ENCODE measurements at regions of chr21 and their contacts with region 1.

Region 1: DNA sequence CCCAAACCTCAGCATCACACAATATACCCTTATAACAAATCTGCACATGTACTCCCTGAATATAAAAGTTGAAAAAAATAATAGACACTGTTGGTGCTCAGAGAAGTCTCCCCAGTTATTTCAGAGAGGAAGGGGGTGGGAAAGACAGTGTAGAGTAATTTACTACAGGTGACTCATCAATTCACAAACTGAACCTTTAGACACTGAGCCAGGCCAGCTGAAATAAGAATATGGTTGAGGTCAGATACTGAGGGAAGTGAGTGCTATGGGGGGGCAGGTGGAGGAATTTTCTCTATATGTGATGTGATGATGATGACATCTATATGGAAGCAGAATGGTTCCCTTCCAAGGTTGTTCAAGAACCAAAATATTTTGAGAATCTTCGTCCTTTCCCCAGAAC is 50.1 kb downstream of the MRPL39 start:
- DNase-seq: no peak
- H3K4me3 ChIP-seq: no peak overlapping the region
- H3K27ac ChIP-seq: no peak overlapping the region
- H3K4me1 ChIP-seq: peaks cover 0 to 4% of the 10 kb centered on the region in 2 donors
- H3K27me3 ChIP-seq: no peaks in the 10 kb centered on the region
- CTCF ChIP-seq: no peak
- POLR2A ChIP-seq: no peak

Region 2: GRCh38 chr21:25079053-25079452 is 478.1 kb before region 1 on chr21:
- intact Hi-C with region 1: no loop called
- DNase-seq: no peak
- H3K4me3 ChIP-seq: no peak overlapping the region
- H3K27ac ChIP-seq: no peak overlapping the region
- H3K4me1 ChIP-seq: no peaks in the 10 kb centered on the region
- H3K27me3 ChIP-seq: no peaks in the 10 kb centered on the region
- CTCF ChIP-seq: no peak
- POLR2A ChIP-seq: no peak

Region 3: GRCh38 chr21:25428537-25428936 is 128.6 kb before region 1 on chr21:
- intact Hi-C with region 1: loop called (anchors 10 kb)
- DNase-seq: no peak
- H3K4me3 ChIP-seq: no peak overlapping the region
- H3K27ac ChIP-seq: no peak overlapping the region
- H3K4me1 ChIP-seq: no peaks in the 10 kb centered on the region
- H3K27me3 ChIP-seq: no peaks in the 10 kb centered on the region
- CTCF ChIP-seq: no peak
- POLR2A ChIP-seq: no peak

Region 4: GRCh38 chr21:25487046-25487594 is 70.1 kb before region 1 on chr21:
- intact Hi-C with region 1: no loop called
- DNase-seq: no peak
- H3K4me3 ChIP-seq: no peak overlapping the region
- H3K27ac ChIP-seq: no peak overlapping the region
- H3K4me1 ChIP-seq: no peaks in the 10 kb centered on the region
- H3K27me3 ChIP-seq: no peaks in the 10 kb centered on the region
- CTCF ChIP-seq: no peak
- POLR2A ChIP-seq: no peak